Aorta (tissue), 5 donors: ENCODE measurements at regions of chr3 and their contacts with region 1.

Region 1: DNA sequence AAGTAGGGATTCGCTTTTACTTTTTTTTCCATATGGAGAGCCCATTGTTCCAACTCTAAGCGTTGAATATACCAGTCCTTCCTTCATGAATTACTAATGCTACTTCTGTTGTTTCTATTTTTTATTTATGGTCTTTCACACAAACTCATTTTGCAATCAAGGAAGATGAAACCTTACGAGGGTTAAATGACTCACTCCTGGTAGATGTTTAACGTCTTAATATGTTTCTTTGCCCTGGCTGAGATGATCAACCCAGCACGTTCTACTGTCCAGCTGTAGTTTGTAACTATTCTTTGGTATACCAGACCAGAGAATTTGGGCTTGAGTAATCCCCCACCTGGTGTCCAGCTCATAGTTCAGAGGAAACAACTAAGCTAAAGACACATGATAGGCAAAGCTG is 23.1 kb downstream of the CDCP1 start:
- DNase-seq: no peak
- ATAC-seq: no peak
- H3K4me3 ChIP-seq: no peak overlapping the region
- H3K27ac ChIP-seq: no peak overlapping the region
- H3K4me1 ChIP-seq: no peaks in the 10 kb centered on the region
- H3K27me3 ChIP-seq: no peaks in the 10 kb centered on the region

Region 2: GRCh38 chr3:45043728-45044299 is 79.2 kb before region 1 on chr3:
- intact Hi-C with region 1: loop called in 1 of 2 experiments (anchors 5 kb)
- DNase-seq: no peak
- ATAC-seq: peak; percentile 30
- H3K4me3 ChIP-seq: no peak overlapping the region
- H3K27ac ChIP-seq: peak overlapping the region in 1 of 2 donors; percentile 95
- H3K4me1 ChIP-seq: peaks cover 0 to 3% of the 10 kb centered on the region in 2 donors
- H3K27me3 ChIP-seq: no peaks in the 10 kb centered on the region

Region 3: GRCh38 chr3:45055411-45056143 is 67.5 kb before region 1 on chr3:
- intact Hi-C with region 1: loop called in 1 of 2 experiments (anchors 5 kb)
- DNase-seq: no peak
- ATAC-seq: no peak
- H3K4me3 ChIP-seq: no peak overlapping the region
- H3K27ac ChIP-seq: peak overlapping the region in 1 of 2 donors; percentile 29
- H3K4me1 ChIP-seq: no peaks in the 10 kb centered on the region
- H3K27me3 ChIP-seq: no peaks in the 10 kb centered on the region

Region 4: DNA sequence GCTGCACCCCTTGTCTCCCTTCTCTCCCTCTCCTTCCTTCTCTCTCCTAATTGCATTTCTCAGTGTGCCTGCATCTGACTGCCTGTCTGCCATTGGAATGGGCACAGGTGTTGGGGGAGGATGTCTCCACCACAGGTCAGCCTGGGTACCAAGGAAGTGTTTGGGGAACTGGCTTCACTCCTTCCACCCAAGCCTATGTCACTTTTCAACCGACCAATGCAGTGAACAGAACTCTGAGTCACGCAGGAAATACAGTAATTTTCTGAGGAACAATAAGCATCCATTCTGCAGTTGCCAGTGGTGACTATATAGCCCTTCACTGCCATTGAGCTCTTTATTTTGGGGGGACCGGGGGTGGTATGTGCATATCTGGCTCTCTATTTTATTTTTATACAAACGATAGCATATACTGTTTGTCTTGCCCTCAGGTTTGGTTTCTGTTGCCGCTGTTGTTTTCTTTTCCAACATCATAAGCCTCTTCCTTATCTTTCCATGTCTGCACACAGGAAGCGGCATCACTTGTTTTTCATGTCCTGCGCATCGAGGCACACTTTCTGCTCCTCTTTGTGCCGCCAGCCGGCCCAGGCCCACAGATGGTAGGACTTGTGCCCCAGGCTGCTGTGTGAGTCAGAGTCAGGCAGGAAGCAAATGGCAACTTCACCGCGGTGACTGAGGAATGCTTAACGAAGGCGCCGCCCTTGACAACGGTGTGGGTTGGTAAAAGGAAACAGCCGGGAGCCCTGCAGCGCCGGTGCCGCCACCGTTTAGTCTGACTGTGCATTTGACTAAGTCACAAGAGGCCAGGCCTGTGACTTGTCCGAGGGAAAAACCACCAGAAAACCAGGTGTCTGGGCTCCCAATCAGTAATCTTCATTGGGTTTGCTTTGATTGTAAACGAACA is 44.2 kb after region 1 on chr3:
- intact Hi-C with region 1: loop called in 1 of 2 experiments (anchors 5 kb)
- DNase-seq: peak; percentile 93 to 94
- ATAC-seq: peak; percentile 77
- H3K4me3 ChIP-seq: no peak overlapping the region
- H3K27ac ChIP-seq: peak overlapping the region in 1 of 2 donors; percentile 45
- H3K4me1 ChIP-seq: no peaks in the 10 kb centered on the region
- H3K27me3 ChIP-seq: no peaks in the 10 kb centered on the region

Region 5: DNA sequence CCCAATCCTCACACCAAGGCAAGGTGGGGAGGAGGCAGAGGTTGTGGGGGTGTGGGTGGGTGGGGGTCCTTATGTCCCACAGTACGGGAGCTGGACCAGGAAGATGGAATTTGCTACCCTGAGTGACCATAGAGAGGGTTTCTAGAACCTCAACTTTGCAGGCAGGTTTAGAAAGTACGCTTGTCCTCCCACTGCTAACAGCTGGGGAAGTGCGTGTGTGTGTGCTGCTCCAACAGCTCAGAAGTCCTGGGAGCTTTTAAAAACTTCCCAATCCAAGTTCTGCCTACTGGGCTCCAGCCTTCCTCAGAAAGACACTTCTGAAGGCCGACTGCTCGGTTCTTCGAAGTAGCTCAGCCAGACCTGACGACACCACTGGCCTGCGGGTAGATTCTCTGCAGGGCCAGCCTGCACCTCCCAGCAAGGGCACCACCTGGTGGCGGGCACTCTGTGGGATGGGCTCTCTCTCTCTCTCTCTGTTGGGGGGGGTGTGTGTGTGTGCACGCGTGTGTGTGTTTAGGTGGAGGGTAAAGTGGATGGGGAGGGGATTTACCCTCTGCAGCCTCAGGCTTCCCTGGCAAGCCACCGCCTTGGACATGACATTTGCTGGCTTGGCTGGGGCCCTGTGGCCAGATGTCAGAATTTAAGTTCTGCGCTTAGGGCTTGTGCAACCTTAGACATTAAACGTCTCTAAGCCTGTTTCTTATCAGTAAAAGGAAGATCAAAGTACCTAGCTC is 87.4 kb after region 1 on chr3:
- intact Hi-C with region 1: loop called in 1 of 2 experiments (anchors 5 kb)
- DNase-seq: peak; percentile 93 to 95
- ATAC-seq: peak; percentile 91
- H3K4me3 ChIP-seq: no peak overlapping the region
- H3K27ac ChIP-seq: no peak overlapping the region
- H3K4me1 ChIP-seq: no peaks in the 10 kb centered on the region
- H3K27me3 ChIP-seq: no peaks in the 10 kb centered on the region

Region 6: GRCh38 chr3:45537970-45538640 is 415.1 kb after region 1 on chr3:
- intact Hi-C with region 1: no loop called
- DNase-seq: peak in 1 of 2 donors; percentile 58
- ATAC-seq: no peak
- H3K4me3 ChIP-seq: no peak overlapping the region
- H3K27ac ChIP-seq: no peak overlapping the region
- H3K4me1 ChIP-seq: no peaks in the 10 kb centered on the region
- H3K27me3 ChIP-seq: no peaks in the 10 kb centered on the region